Ascending aorta (tissue), 2 donors: ENCODE measurements at regions of chr17 and their contacts with region 1.

Region 1: GRCh38 chr17:58517734-58518609 is 3.5 kb upstream of the MTMR4 start:
- DNase-seq: peak; percentile 100
- H3K4me3 ChIP-seq: peak overlapping the region; percentile 74 to 86
- H3K27ac ChIP-seq: peak overlapping the region; percentile 93 to 98
- H3K4me1 ChIP-seq: peaks cover 7 to 17% of the 10 kb centered on the region in 2 donors
- H3K27me3 ChIP-seq: no peaks in the 10 kb centered on the region
- CTCF ChIP-seq: no peak

Region 2: GRCh38 chr17:56833809-56834379 is 1684.1 kb before region 1 on chr17 and contains the starts of genes C17orf67 and DGKE:
- intact Hi-C with region 1: loop called (anchors 5 kb)
- DNase-seq: peak; percentile 93 to 98
- H3K4me3 ChIP-seq: peak within 1 kb of the TSS; percentile 71 to 91
- H3K27ac ChIP-seq: peak within 1 kb of the TSS; percentile 80 to 82
- H3K4me1 ChIP-seq: peaks cover 0 to 16% of the 10 kb centered on the region in 2 donors
- H3K27me3 ChIP-seq: no peaks in the 10 kb centered on the region
- CTCF ChIP-seq: no peak
- total RNA-seq, gene C17orf67: 10.1 TPM
- total RNA-seq, gene DGKE: 85.0 TPM

Region 3: GRCh38 chr17:58219001-58219788 is 298.8 kb before region 1 on chr17 and contains the start of gene MKS1:
- intact Hi-C with region 1: loop called (anchors 2 kb)
- DNase-seq: peak; percentile 70 to 97
- H3K4me3 ChIP-seq: peak within 1 kb of the TSS; percentile 58 to 65
- H3K27ac ChIP-seq: peak within 1 kb of the TSS; percentile 56 to 67
- H3K4me1 ChIP-seq: no peaks in the 10 kb centered on the region
- H3K27me3 ChIP-seq: no peaks in the 10 kb centered on the region
- CTCF ChIP-seq: peak; percentile 56 to 79 (median 75)
- total RNA-seq, gene MKS1: 1.5 TPM

Region 4: GRCh38 chr17:58337600-58338453 is 180.1 kb before region 1 on chr17:
- intact Hi-C with region 1: no loop called
- DNase-seq: peak; percentile 72 to 90
- H3K4me3 ChIP-seq: peak overlapping the region in 1 of 2 donors; percentile 31
- H3K27ac ChIP-seq: peak overlapping the region; percentile 56 to 77
- H3K4me1 ChIP-seq: peaks cover 0 to 3% of the 10 kb centered on the region in 2 donors
- H3K27me3 ChIP-seq: no peaks in the 10 kb centered on the region
- CTCF ChIP-seq: no peak

Region 5: GRCh38 chr17:58631523-58632323 is 113.8 kb after region 1 on chr17:
- intact Hi-C with region 1: loop called (anchors 1 kb)
- DNase-seq: peak; percentile 71 to 97
- H3K4me3 ChIP-seq: peak overlapping the region; percentile 40 to 57
- H3K27ac ChIP-seq: peak overlapping the region; percentile 80 to 85
- H3K4me1 ChIP-seq: no peaks in the 10 kb centered on the region
- H3K27me3 ChIP-seq: no peaks in the 10 kb centered on the region
- CTCF ChIP-seq: peak; percentile 5 to 27 (median 26)

Region 6: GRCh38 chr17:59004338-59005111 is 486.6 kb after region 1 on chr17:
- intact Hi-C with region 1: loop called (anchors 2 kb)
- DNase-seq: peak in 1 of 2 donors; percentile 78
- H3K4me3 ChIP-seq: no peak overlapping the region
- H3K27ac ChIP-seq: no peak overlapping the region
- H3K4me1 ChIP-seq: no peaks in the 10 kb centered on the region
- H3K27me3 ChIP-seq: no peaks in the 10 kb centered on the region
- CTCF ChIP-seq: peak; percentile 79 to 93 (median 91)

Region 7: GRCh38 chr17:59220376-59221158 is 702.6 kb after region 1 on chr17 and contains the start of gene GDPD1:
- intact Hi-C with region 1: loop called (anchors 10 kb)
- DNase-seq: peak; percentile 63 to 97
- H3K4me3 ChIP-seq: peak within 1 kb of the TSS; percentile 78 to 84
- H3K27ac ChIP-seq: peak within 1 kb of the TSS; percentile 6 to 37
- H3K4me1 ChIP-seq: no peaks in the 10 kb centered on the region
- H3K27me3 ChIP-seq: no peaks in the 10 kb centered on the region
- CTCF ChIP-seq: peak; percentile 76 to 90 (median 82)
- total RNA-seq, gene GDPD1: not detected